ENCODE measurements at regions of chr17 and their contacts with region 1.

Region 1: GRCh38 chr17:45277216-45277849 is 15.4 kb upstream of the SPATA32 start:
- DNase-seq: peak; percentile 76 to 95 (median 88)
- ATAC-seq: peak; percentile 93 to 96 (median 94)
- H3K4me3 ChIP-seq: no peak overlapping the region
- H3K4me3 Mint-ChIP-seq: peak overlapping the region in 1 of 3 donors; percentile 25
- H3K27ac ChIP-seq: no peak overlapping the region
- H3K27ac Mint-ChIP-seq: peak overlapping the region; percentile 41
- H3K4me1 ChIP-seq: peaks cover 0 to 5% of the 10 kb centered on the region in 2 experiments
- H3K4me1 Mint-ChIP-seq: peaks cover 9 to 11% (median 9%) of the 10 kb centered on the region in 3 donors
- H3K27me3 ChIP-seq: no peaks in the 10 kb centered on the region
- H3K27me3 Mint-ChIP-seq: no peaks in the 10 kb centered on the region

Region 2: DNA sequence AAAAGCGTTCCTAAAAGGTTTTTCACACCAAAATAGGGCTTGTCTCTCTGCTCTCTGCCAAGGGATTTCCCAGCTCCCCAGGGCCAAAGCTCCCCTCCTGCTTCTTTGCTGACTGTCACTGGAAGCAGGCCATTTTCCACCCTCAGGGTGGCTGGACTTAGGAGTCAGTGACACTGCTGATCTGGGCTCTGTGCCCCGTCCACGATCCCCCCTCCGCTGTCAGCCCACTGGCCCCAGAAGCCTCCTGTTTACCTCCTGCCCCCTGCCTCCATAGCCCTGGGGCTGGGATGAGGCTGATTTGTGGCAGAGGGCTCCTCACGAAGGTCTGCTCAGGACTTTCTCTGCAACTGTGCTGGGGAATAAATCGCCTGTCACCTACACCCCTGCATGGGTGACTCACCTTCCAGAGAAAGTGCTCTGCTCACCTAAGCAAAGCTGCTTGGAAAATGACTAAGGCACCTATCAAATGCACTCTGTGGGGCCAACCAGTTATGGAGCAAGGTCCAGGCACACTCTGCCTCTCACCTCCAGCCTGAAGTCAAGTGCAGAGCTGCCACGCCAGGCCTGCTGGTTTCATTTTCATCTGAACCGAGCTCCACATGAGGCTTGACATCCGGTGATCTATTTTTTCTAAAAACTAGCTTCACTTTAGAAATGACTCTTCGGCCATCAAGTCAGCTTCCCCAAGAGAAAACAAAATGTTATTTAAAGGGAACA is 34.6 kb after region 1 on chr17:
- CTCF ChIA-PET with region 1: interaction called, 4 to 19 read pairs
- POLR2A ChIA-PET with region 1: interaction called in 1 of 2 experiments, 3 read pairs
- DNase-seq: peak; percentile 27 to 81 (median 49)
- ATAC-seq: peak; percentile 10 to 21 (median 14)
- H3K4me3 ChIP-seq: peak overlapping the region; percentile 20 to 52
- H3K4me3 Mint-ChIP-seq: peak overlapping the region; percentile 79 to 90 (median 85)
- H3K27ac ChIP-seq: peak overlapping the region; percentile 94
- H3K27ac Mint-ChIP-seq: peak overlapping the region; percentile 97 to 99
- H3K4me1 ChIP-seq: peaks cover 44 to 78% of the 10 kb centered on the region in 2 experiments
- H3K4me1 Mint-ChIP-seq: peaks cover 80 to 85% (median 82%) of the 10 kb centered on the region in 3 donors
- H3K27me3 ChIP-seq: no peaks in the 10 kb centered on the region
- H3K27me3 Mint-ChIP-seq: no peaks in the 10 kb centered on the region

Region 3: GRCh38 chr17:45317112-45317928 is 40.0 kb after region 1 on chr17:
- CTCF ChIA-PET with region 1: interaction called, 4 to 19 read pairs
- POLR2A ChIA-PET with region 1: interaction called in 1 of 2 experiments, 3 read pairs
- DNase-seq: peak; percentile 99 to 100 (median 100)
- ATAC-seq: peak; percentile 81 to 86 (median 82)
- H3K4me3 ChIP-seq: peak overlapping the region; percentile 55 to 57
- H3K4me3 Mint-ChIP-seq: peak overlapping the region; percentile 85 to 88 (median 88)
- H3K27ac ChIP-seq: peak overlapping the region; percentile 64
- H3K27ac Mint-ChIP-seq: peak overlapping the region; percentile 94
- H3K4me1 ChIP-seq: peaks cover 48 to 75% of the 10 kb centered on the region in 2 experiments
- H3K4me1 Mint-ChIP-seq: peaks cover 83 to 88% (median 85%) of the 10 kb centered on the region in 3 donors
- H3K27me3 ChIP-seq: no peaks in the 10 kb centered on the region
- H3K27me3 Mint-ChIP-seq: no peaks in the 10 kb centered on the region

Region 4: DNA sequence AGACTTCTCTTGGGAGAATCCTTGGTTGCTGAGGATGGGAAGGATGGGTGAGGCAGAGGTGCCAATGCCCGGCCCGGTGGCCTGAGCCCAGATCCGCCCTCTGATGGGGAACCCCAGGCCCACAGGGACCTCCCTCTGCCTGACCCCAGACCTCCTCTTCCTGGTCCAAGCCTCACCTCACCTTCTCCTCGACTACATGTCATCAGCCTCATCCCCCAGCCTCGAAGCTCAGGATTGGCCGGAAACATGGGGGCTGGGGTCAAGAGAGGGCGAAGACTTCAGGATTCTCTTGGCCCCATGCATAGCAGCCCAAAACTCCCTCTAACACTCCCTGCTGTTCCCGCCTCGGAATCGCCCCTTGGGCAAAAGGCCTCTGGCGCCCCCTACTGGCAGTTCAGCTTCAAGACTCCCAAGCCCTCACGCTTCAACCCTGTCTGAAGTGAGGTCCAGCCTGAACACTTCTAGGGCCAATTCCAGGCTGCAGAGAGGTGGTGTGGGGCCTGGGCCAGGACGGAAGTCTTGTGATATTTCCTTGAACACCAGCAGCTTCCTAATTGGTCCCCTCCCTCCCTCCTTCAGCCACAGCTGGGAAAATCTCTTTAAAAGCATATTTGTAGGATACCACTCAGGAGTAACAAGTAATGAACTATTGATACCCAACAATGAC is 108.1 kb after region 1 on chr17:
- CTCF ChIA-PET with region 1: interaction called, 8 to 57 read pairs
- POLR2A ChIA-PET with region 1: no interaction called
- DNase-seq: peak; percentile 58 to 92 (median 84)
- ATAC-seq: peak; percentile 93 to 97 (median 94)
- H3K4me3 ChIP-seq: no peak overlapping the region
- H3K4me3 Mint-ChIP-seq: no peak overlapping the region
- H3K27ac ChIP-seq: no peak overlapping the region
- H3K27ac Mint-ChIP-seq: no peak overlapping the region
- H3K4me1 ChIP-seq: peaks cover 4 to 20% of the 10 kb centered on the region in 2 experiments
- H3K4me1 Mint-ChIP-seq: peaks cover 7 to 22% (median 13%) of the 10 kb centered on the region in 3 donors
- H3K27me3 ChIP-seq: peaks cover 0 to 30% of the 10 kb centered on the region in 2 experiments
- H3K27me3 Mint-ChIP-seq: peaks cover 3 to 13% of the 10 kb centered on the region in 2 donors

Measured in T-cell (primary cell).